ENCODE measurements at regions of chr20 and their contacts with region 1.

Region 1: GRCh38 chr20:61588411-61589386 is 336.6 kb downstream of the CDH4 start:
- DNase-seq: peak; percentile 90
- ATAC-seq: peak; percentile 77
- H3K4me3 ChIP-seq: peak overlapping the region; percentile 12; the same call in 1 of the 2 replicates
- H3K27ac ChIP-seq: peak overlapping the region; percentile 69
- H3K4me1 ChIP-seq: peaks cover 10% of the 10 kb centered on the region
- H3K27me3 ChIP-seq: no peaks in the 10 kb centered on the region; the same call in 1 of the 2 replicates
- CTCF ChIP-seq: no peak
- POLR2A ChIP-seq: no peak
- RAD21 ChIP-seq: no peak

Region 2: GRCh38 chr20:61556116-61556515 is 32.6 kb before region 1 on chr20:
- CTCF ChIA-PET with region 1: no interaction called
- POLR2A ChIA-PET with region 1: no interaction called
- dilution Hi-C with region 1: no loop called
- in situ Hi-C with region 1: no loop called
- intact Hi-C with region 1: loop called (anchors 2 kb)
- DNase-seq: peak; percentile 93
- ATAC-seq: peak; percentile 96
- H3K4me3 ChIP-seq: no peak overlapping the region
- H3K27ac ChIP-seq: peak overlapping the region; percentile 86
- H3K4me1 ChIP-seq: peaks cover 10% of the 10 kb centered on the region
- H3K27me3 ChIP-seq: no peaks in the 10 kb centered on the region
- CTCF ChIP-seq: no peak
- POLR2A ChIP-seq: no peak
- RAD21 ChIP-seq: peak; percentile 28; the same call in 1 of the 2 replicates

Region 3: DNA sequence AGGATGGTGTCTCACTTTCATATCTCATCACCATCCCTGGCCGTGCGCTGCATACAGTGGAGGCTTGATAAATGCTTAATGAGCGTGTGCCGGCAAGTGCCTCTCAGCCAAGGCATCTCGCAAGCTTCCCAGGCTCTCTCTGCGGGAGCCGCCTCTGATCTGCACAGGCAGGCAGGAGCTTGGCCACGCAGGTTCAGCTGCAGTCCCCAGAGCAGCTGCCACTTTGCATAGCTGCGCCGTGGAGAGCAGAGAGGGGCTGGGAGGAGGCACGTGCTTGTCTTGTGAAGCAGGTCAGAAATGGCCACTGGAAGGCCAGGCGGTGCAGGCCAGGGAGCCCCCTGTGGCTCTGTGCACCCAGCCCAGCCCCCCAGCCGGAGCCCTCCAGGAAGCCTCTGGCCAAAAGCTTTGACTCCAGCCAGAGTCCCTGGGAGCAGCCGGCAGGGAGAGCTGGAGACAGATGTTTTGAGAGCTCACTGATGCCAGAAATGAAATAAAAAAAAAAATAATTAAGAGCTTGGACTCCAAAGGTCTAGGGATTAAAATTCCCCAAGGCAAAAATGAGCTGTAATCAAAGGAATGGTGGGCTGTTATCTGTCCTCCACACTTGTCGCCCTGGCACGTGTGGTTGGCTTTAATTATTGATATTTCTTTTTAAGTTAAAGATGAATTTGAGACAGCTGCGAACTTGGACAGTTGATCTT is 40.4 kb after region 1 on chr20:
- CTCF ChIA-PET with region 1: no interaction called
- POLR2A ChIA-PET with region 1: no interaction called
- dilution Hi-C with region 1: no loop called
- in situ Hi-C with region 1: no loop called
- intact Hi-C with region 1: no loop called
- DNase-seq: no peak
- ATAC-seq: peak; percentile 44
- H3K4me3 ChIP-seq: no peak overlapping the region
- H3K27ac ChIP-seq: no peak overlapping the region
- H3K4me1 ChIP-seq: no peaks in the 10 kb centered on the region
- H3K27me3 ChIP-seq: no peaks in the 10 kb centered on the region; the same call in 1 of the 2 replicates
- CTCF ChIP-seq: no peak
- POLR2A ChIP-seq: no peak
- RAD21 ChIP-seq: no peak